ENCODE measurements at regions of chr12 and their contacts with region 1.

Region 1: DNA sequence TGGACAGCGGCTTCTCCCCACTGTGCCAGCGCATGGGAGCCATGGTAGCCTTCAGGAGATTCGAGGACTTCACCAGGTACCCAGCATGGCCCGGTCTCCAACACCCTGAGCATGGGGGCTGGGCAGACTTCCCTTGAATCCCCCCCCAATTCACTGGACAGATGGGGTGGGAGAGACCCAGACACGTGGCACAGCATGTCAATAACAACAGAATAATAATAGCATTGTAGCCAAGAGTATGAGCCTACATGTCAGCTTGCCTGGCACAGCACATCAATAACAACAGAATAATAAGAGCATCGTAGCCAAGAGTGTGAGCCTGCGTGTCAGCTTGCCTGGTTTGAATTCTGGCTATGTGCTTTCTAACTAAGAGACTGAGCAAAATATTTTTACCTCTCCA is 76.4 kb downstream of the FOXN4 start:
- DNase-seq: no peak

Region 2: GRCh38 chr12:109179927-109180326 is 52.8 kb before region 1 on chr12:
- intact Hi-C with region 1: loop called in 1 of 2 experiments (anchors 1 kb)
- DNase-seq: no peak

Region 3: DNA sequence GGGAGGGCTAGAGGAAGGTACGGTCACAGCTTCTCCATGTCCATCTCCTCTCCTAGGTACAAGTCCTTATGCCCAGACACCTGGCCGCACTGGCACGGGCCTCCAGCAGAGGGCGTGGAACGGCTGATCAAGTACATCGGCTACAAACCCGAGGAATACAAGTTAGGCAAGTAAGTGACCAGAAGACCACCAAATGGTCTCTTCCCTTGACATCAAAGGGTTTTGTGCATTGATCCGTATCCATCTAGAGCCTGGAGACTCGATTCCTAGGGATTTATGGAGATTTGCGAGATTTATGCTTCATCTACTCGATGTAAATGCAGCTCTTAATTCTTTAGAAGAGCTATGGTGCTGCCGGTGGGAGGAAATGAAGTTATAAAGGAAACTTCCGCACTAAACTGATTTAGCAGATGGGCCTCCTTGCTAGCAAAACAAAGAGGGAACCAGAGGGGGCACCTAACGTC is 200.1 kb after region 1 on chr12:
- intact Hi-C with region 1: no loop called
- DNase-seq: peak; percentile 93